ENCODE measurements at regions of chr6 and their contacts with region 1.

Region 1: DNA sequence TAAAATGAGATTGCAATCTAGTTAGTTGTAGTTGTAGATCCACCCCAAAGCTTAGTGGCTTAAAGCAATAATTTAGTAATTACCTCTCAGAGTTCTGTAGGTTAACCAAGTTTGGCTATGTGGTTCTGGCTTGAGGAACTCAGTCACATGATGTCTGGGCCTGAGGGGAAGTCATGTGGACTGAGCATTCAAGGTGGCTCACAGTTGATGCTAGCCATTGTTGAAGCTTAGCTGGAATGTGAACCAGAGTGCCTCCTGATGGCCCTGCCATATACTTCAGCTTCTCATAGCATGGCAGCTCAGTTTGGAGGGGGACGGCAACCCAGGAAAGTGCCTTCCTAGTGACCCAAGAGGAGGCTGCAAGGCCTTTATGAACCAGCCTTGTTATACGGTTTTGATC is 263.2 kb upstream of the RNF217 start:
- DNase-seq: no peak
- H3K4me3 ChIP-seq: no peak overlapping the region
- H3K27ac ChIP-seq: no peak overlapping the region
- H3K4me1 ChIP-seq: no peaks in the 10 kb centered on the region
- H3K27me3 ChIP-seq: no peaks in the 10 kb centered on the region
- CTCF ChIP-seq: no peak

Region 2: DNA sequence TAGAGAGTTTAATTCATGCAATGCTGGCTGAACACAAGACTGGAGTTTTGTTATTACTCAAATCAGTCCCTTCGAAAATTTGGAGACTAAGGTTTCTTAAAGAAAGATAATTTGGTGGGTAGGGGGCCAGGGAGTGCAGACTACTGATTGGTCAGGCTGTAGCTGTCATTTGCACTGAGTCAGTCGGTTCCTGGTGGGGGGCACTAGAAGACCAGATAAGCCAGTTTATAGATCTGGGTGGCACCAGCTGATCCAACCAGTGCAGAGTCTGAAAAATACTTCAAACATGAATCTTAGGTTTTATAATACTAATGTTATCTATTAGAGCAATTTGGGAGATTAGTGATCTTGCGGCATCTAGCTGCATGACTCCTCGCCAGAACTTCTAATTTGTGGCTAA is 364.7 kb before region 1 on chr6:
- intact Hi-C with region 1: loop called (anchors 5 kb)
- DNase-seq: no peak
- H3K4me3 ChIP-seq: no peak overlapping the region
- H3K27ac ChIP-seq: no peak overlapping the region
- H3K4me1 ChIP-seq: no peaks in the 10 kb centered on the region
- H3K27me3 ChIP-seq: no peaks in the 10 kb centered on the region
- CTCF ChIP-seq: no peak

Region 3: DNA sequence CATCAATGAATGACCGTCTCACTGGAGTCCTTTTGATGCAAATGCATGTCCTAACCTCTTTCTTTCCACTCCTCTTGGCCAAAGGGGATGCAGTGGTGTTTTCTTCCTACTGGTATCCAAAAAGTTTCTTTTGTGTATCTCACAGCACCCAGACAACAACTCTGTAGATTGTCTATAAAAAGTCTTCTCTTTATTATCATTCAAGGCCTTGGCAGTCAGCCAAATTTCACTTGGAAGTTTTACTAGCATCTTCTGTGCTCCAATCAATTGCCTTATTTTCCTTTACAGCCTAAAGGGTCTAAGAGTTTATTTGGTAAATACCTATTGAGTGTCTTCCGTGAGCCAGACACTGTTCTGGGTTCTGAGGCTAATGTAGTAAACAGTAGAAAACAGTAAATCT is 113.0 kb after region 1 on chr6:
- intact Hi-C with region 1: no loop called
- DNase-seq: no peak
- H3K4me3 ChIP-seq: no peak overlapping the region
- H3K27ac ChIP-seq: no peak overlapping the region
- H3K4me1 ChIP-seq: no peaks in the 10 kb centered on the region
- H3K27me3 ChIP-seq: no peaks in the 10 kb centered on the region
- CTCF ChIP-seq: no peak

Region 4: GRCh38 chr6:124823240-124824111 is 124.4 kb after region 1 on chr6:
- intact Hi-C with region 1: no loop called
- DNase-seq: no peak
- H3K4me3 ChIP-seq: no peak overlapping the region
- H3K27ac ChIP-seq: no peak overlapping the region
- H3K4me1 ChIP-seq: no peaks in the 10 kb centered on the region
- H3K27me3 ChIP-seq: no peaks in the 10 kb centered on the region
- CTCF ChIP-seq: no peak

Measured in ascending aorta (tissue), 2 donors.